Aorta (tissue), 5 donors: ENCODE measurements at regions of chr16 and their contacts with region 1.

Region 1: GRCh38 chr16:87387942-87388817 is 4.0 kb upstream of the MAP1LC3B start:
- DNase-seq: peak; percentile 93 to 95
- ATAC-seq: peak; percentile 84
- H3K4me3 ChIP-seq: peak overlapping the region in 1 of 2 donors; percentile 13
- H3K27ac ChIP-seq: peak overlapping the region; percentile 50 to 97
- H3K4me1 ChIP-seq: peaks cover 0 to 4% of the 10 kb centered on the region in 2 donors
- H3K27me3 ChIP-seq: peaks cover 0 to 2% of the 10 kb centered on the region in 2 donors

Region 2: DNA sequence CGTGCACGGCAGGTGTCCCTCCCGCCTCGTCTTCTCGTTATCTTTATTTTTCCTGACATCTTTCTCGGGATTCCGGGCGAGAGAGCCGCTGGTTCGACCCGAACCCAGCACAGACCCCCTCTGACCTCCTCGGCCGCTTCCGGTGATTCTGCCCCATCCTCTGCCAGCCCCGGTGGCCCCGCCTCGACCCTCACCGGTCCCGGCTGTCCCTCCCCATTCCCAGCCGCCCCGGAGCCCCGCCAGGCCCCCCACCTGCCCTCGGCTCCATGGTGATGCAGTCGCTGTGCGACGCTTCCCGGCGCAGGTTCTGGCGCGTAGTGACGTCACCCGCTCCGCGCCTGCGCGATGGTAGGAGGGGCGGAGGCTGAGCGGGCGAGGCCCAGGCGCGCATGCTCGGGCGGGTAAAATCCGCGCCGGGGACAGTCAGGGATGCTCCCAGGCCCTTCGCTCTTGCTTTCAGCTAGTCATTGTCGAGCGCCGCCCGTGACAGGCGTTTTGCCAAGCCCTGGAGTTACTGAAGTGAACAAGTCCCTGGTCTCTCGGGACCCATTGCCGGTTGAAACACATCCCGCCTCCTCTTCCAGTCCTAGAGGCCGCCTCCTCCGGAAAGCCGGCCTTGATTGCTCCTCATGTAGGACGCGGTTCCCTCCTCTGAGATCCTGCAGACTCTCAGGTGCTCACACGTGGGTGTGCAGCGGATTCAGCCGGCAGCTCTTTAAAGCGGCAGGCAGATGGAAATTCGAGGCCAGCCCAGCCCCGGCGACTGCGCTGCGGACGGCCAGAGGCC is 833.1 kb before region 1 on chr16 and contains the start of gene MTHFSD:
- intact Hi-C with region 1: loop called (anchors 5 to 10 kb)
- DNase-seq: peak; percentile 96 to 99
- ATAC-seq: peak; percentile 95
- H3K4me3 ChIP-seq: peak within 1 kb of the TSS; percentile 93 to 96
- H3K27ac ChIP-seq: peak within 1 kb of the TSS; percentile 30 to 85
- H3K4me1 ChIP-seq: no peaks in the 10 kb centered on the region
- H3K27me3 ChIP-seq: no peaks in the 10 kb centered on the region
- total RNA-seq, gene MTHFSD: 14.0 to 23.1 TPM

Region 3: GRCh38 chr16:86931399-86931941 is 456.7 kb before region 1 on chr16:
- intact Hi-C with region 1: loop called in 1 of 2 experiments (anchors 10 kb)
- DNase-seq: peak; percentile 85 to 93
- ATAC-seq: peak; percentile 49
- H3K4me3 ChIP-seq: no peak overlapping the region
- H3K27ac ChIP-seq: peak overlapping the region in 1 of 2 donors; percentile 7
- H3K4me1 ChIP-seq: no peaks in the 10 kb centered on the region
- H3K27me3 ChIP-seq: no peaks in the 10 kb centered on the region

Region 4: GRCh38 chr16:87337262-87337771 is 50.9 kb before region 1 on chr16:
- intact Hi-C with region 1: no loop called
- DNase-seq: peak in 1 of 2 donors; percentile 51
- ATAC-seq: no peak
- H3K4me3 ChIP-seq: no peak overlapping the region
- H3K27ac ChIP-seq: no peak overlapping the region
- H3K4me1 ChIP-seq: no peaks in the 10 kb centered on the region
- H3K27me3 ChIP-seq: no peaks in the 10 kb centered on the region

Region 5: DNA sequence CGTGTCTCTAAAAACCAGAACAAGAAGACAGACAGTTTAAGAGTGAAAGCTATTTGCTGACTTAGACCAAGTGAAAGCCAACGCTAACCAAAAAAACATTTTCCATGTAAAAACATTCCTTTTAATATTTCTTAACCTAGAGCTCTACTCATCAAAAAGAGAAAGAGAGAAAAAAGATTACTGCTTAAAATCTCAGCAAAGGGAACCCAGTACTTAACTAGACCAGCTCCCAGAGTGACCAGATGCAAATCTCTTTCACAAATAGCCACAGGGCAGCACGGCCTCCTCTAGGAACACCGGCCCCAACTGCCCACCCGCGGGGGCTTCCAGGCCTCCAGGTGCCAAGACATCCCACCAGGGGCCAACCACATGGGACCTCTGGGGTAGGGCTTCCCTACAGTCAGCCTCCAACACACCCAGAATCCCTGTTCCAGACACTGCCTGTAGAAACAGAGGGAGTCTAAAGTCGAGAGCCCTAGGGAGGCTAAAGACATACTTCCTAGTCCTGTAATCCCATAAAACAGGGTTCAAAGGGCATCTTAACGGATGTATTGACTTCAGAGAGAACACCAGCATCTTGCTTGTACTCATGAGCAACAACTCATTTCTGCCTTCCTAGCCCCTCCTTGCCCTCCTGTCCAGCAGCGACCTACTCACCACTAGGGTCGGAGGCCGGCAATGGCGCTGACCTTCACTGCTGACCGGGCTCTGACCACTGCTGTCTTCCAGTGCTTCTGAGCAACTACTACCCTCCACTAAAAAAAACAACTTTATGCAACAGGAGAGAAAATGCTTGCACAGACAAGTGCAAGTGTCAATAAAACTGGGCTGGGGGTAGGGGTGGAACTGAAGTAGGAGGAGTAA is 83.3 kb after region 1 on chr16:
- intact Hi-C with region 1: loop called in 1 of 2 experiments (anchors 10 kb)
- DNase-seq: no peak
- ATAC-seq: peak; percentile 35
- H3K4me3 ChIP-seq: no peak overlapping the region
- H3K27ac ChIP-seq: no peak overlapping the region
- H3K4me1 ChIP-seq: peaks cover 0 to 4% of the 10 kb centered on the region in 2 donors
- H3K27me3 ChIP-seq: no peaks in the 10 kb centered on the region

Region 6: DNA sequence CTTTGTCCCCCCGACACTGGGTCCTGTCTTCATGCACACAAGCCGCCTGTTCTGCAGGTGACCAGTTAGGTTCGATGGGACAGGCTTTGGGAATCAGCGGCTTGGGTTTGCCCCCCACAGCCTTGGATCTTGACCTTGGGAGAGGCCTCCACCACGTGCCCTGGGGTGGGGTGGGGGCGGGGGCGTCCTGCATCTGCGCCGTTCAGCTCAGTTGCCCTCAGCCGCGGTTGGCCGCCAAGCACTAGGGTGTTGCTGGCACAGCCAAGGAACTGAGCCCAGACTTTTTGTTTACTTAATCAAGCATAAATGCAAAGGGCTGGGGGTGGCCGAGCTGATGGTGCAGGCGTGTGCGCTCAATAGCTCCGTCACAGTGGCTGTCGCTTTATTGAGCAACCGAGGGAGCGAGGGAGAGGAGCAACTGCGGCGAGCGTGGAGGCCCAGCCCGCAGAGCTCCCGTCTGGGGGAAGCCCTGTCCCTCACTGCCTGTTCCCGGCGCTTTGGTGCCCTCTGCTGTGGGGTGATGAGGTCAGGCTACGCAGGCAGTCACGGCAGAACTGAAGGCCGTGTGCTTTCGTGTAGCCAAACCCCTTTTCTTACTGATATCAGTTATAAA is 248.0 kb after region 1 on chr16:
- intact Hi-C with region 1: loop called in 1 of 2 experiments (anchors 1 kb)
- DNase-seq: peak; percentile 90 to 93
- ATAC-seq: peak; percentile 92
- H3K4me3 ChIP-seq: no peak overlapping the region
- H3K27ac ChIP-seq: no peak overlapping the region
- H3K4me1 ChIP-seq: no peaks in the 10 kb centered on the region
- H3K27me3 ChIP-seq: no peaks in the 10 kb centered on the region